K562 (cell line): ENCODE measurements at regions of chr19 and their contacts with region 1.

Region 1: DNA sequence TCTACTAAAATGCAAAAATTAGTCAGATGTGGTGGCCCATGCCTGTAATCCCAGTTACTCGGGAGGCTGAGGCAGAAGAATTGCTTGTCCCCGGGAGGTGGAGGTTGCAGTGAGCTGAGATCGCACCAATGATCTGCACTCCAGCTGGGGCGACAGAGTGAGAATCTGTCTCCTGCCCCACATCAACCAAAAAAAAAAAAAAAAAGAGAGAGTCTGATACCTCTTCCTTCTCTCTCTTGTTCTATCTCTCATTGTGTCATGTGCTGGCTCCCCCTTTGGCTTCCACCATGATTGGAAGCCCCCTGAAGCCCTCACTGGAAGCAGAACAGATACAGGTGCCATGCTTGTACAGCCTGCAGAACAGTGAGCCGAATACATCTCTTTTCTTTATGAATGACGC is 20.4 kb downstream of the CLEC11A start:
- DNase-seq: no peak
- ATAC-seq: peak; percentile 5
- H3K4me3 ChIP-seq: peak overlapping the region; percentile 12; the same call in 1 of the 2 replicates
- H3K27ac ChIP-seq: peak overlapping the region; percentile 84
- H3K4me1 ChIP-seq: peaks cover 46 to 55% of the 10 kb centered on the region in 2 experiments
- H3K27me3 ChIP-seq: no peaks in the 10 kb centered on the region
- CTCF ChIP-seq: no peak
- EP300 ChIP-seq: no peak
- POLR2A ChIP-seq: peak; percentile 8; the same call in 1 of the 2 replicates
- RAD21 ChIP-seq: no peak

Region 2: GRCh38 chr19:50724522-50725217 is 18.9 kb before region 1 on chr19:
- CTCF ChIA-PET with region 1: no interaction called
- POLR2A ChIA-PET with region 1: interaction called, 10 read pairs
- in situ Hi-C with region 1: no loop called
- intact Hi-C with region 1: no loop called
- DNase-seq: peak; percentile 98 to 100 (median 99)
- ATAC-seq: peak; percentile 86
- H3K4me3 ChIP-seq: peak overlapping the region; percentile 59
- H3K27ac ChIP-seq: peak overlapping the region; percentile 80
- H3K4me1 ChIP-seq: peaks cover 33 to 67% of the 10 kb centered on the region in 2 experiments; a peak in 4 of 5 replicates
- H3K27me3 ChIP-seq: no peaks in the 10 kb centered on the region
- CTCF ChIP-seq: peak; percentile 87 to 96 (median 91)
- EP300 ChIP-seq: no peak
- POLR2A ChIP-seq: peak; percentile 86
- RAD21 ChIP-seq: peak; percentile 82 to 83

Region 3: DNA sequence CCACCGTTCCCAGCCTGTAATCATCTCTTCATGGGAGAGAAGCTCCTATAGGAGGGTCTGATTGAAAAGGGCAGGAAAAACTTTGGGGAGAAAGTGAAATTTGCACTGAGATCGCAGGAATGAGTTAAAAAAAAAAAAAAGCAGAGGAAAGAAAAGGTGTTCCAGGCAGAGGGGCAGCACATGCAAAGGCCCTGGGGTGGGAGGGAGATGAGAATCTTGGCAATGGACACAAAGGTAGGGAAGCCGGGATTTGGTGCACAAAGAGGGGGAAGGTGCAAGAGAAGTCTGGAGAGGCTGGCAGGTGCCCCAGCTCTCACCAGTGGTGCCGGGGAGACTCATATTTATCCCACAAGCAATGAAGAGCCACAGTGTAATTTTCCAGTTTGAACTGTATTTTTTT is 10.3 kb after region 1 on chr19:
- CTCF ChIA-PET with region 1: no interaction called
- POLR2A ChIA-PET with region 1: interaction called, 13 read pairs
- in situ Hi-C with region 1: no loop called
- intact Hi-C with region 1: no loop called
- DNase-seq: no peak
- ATAC-seq: no peak
- H3K4me3 ChIP-seq: no peak overlapping the region
- H3K27ac ChIP-seq: no peak overlapping the region
- H3K4me1 ChIP-seq: peaks cover 2 to 4% of the 10 kb centered on the region in 2 experiments; a peak in 3 of 5 replicates
- H3K27me3 ChIP-seq: no peaks in the 10 kb centered on the region
- CTCF ChIP-seq: no peak
- EP300 ChIP-seq: no peak
- POLR2A ChIP-seq: no peak
- RAD21 ChIP-seq: no peak

Region 4: GRCh38 chr19:50870417-50871089 is 127.0 kb after region 1 on chr19:
- CTCF ChIA-PET with region 1: no interaction called
- POLR2A ChIA-PET with region 1: no interaction called
- in situ Hi-C with region 1: no loop called
- intact Hi-C with region 1: no loop called
- DNase-seq: peak; percentile 93 to 94 (median 94)
- ATAC-seq: peak; percentile 99
- H3K4me3 ChIP-seq: no peak overlapping the region
- H3K27ac ChIP-seq: no peak overlapping the region; the same call in 2 of the 3 replicates
- H3K4me1 ChIP-seq: peaks cover 4 to 7% of the 10 kb centered on the region in 2 experiments; a peak in 4 of 5 replicates
- H3K27me3 ChIP-seq: peaks cover 13 to 30% of the 10 kb centered on the region in 2 experiments; a peak in 3 of 5 replicates
- CTCF ChIP-seq: peak; percentile 92 to 98 (median 98)
- EP300 ChIP-seq: peak; percentile 51; the same call in 1 of the 2 replicates
- POLR2A ChIP-seq: peak; percentile 42; the same call in 1 of the 2 replicates
- RAD21 ChIP-seq: peak; percentile 88 to 96